ENCODE measurements at regions of chrX and their contacts with region 1.

Region 1: GRCh38 chrX:79336869-79337815 is 30.0 kb downstream of the ITM2A start:
- DNase-seq: no peak
- H3K4me3 ChIP-seq: no peak overlapping the region
- H3K27ac ChIP-seq: no peak overlapping the region
- H3K4me1 ChIP-seq: no peaks in the 10 kb centered on the region
- H3K27me3 ChIP-seq: no peaks in the 10 kb centered on the region
- CTCF ChIP-seq: no peak
- EP300 ChIP-seq: no peak
- POLR2A ChIP-seq: no peak

Region 2: GRCh38 chrX:79365591-79365990 is 28.4 kb after region 1 on chrX:
- in situ Hi-C with region 1: no loop called
- intact Hi-C with region 1: loop called (anchors 1 kb)
- DNase-seq: no peak
- H3K4me3 ChIP-seq: no peak overlapping the region
- H3K27ac ChIP-seq: no peak overlapping the region
- H3K4me1 ChIP-seq: no peaks in the 10 kb centered on the region
- H3K27me3 ChIP-seq: no peaks in the 10 kb centered on the region
- CTCF ChIP-seq: no peak
- EP300 ChIP-seq: no peak
- POLR2A ChIP-seq: no peak

Measured in transverse colon (tissue), 4 donors.